GM12878 (cell line): ENCODE measurements at regions of chr7 and their contacts with region 1.

Region 1: DNA sequence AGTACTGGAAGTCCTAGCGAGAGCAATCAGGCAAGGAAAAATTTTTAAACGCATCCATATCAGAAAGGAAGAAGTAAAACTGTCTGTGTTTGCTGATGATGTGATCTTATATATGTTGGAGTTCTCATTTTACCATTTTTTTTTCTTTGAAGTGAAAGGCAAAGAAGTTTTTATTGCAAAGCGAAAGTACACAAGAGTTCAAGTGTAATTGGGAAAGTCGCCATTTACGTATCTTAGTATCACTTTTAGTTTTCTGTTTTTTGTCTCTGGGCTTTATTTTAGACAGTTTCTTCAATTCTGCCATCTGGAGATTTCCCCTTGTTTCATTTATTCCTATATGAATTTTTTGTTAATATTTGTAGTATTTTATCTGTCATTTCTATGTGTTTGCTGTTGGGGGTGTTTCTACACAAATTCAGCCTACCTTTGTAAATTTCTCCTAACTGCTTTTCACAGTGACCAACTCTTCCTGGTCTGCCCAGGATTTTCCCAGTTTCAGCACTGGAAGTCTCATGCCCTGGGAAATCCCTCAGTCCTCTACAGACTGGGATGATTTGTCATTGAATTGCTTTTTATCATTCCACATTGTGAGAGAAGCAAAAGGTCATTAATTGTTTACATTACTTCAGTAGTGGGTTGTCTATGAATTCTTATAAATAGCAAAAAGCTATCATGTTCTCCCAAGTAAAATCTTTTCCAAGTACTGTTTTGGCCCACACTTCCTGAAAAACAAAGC is 23.2 kb downstream of the BET1 start:
- DNase-seq: no peak
- ATAC-seq: peak; percentile 72
- H3K4me3 ChIP-seq: peak overlapping the region; percentile 38; the same call in 1 of the 2 replicates
- H3K27ac ChIP-seq: peak overlapping the region; percentile 51
- H3K4me1 ChIP-seq: no peaks in the 10 kb centered on the region
- H3K27me3 ChIP-seq: no peaks in the 10 kb centered on the region
- CTCF ChIP-seq: no peak
- EP300 ChIP-seq: no peak
- POLR2A ChIP-seq: no peak
- RAD21 ChIP-seq: no peak

Region 2: GRCh38 chr7:93921607-93922566 is 59.0 kb before region 1 on chr7 and contains the start of gene GNG11:
- CTCF ChIA-PET with region 1: no interaction called
- POLR2A ChIA-PET with region 1: no interaction called
- RAD21 ChIA-PET with region 1: no interaction called
- SMC1A ChIA-PET with region 1: no interaction called
- in situ Hi-C with region 1: no loop called
- intact Hi-C with region 1: no loop called
- DNase-seq: no peak
- ATAC-seq: peak; percentile 84
- H3K4me3 ChIP-seq: peak within 1 kb of the TSS; percentile 61
- H3K27ac ChIP-seq: peak within 1 kb of the TSS; percentile 24; the same call in 1 of the 2 replicates
- H3K4me1 ChIP-seq: no peaks in the 10 kb centered on the region
- H3K27me3 ChIP-seq: no peaks in the 10 kb centered on the region
- CTCF ChIP-seq: peak in 1 of 3 experiments; percentile 21; a peak in 1 of 6 replicates
- EP300 ChIP-seq: no peak
- POLR2A ChIP-seq: no peak
- RAD21 ChIP-seq: no peak
- polyA plus RNA-seq, gene GNG11: 2.0 to 2.3 TPM

Region 3: DNA sequence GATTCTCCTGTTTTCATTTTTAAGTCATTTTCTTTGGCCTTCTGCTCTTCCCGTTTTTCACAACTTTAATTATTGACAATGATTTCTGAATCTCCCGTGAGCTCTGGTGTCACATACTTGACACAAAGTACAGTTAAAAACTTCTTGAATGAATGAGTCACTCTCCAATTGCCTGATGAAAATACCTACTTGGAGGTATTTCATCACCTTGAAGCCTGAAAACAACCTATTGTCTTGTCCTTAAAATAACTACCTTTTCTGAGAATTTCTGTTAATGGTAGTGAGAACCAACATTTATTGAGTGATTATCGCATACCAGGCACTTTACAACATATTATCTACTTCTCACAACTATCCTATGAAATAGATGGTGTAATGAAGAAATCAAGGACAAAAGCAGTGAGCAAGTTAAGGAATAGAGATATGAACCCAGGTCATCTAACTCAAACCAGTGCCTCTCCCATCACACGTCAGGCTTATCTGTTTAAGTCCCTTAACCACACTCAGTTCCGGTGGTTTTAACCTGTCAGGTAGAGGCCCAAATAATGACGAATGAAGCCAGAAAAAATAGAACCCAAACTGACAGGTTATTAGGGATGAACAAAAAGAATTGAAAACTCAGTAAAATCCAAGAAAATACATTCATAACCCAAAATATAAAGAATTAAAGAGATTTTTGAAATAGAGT is 11.7 kb after region 1 on chr7:
- CTCF ChIA-PET with region 1: interaction called, 4 read pairs
- POLR2A ChIA-PET with region 1: no interaction called
- RAD21 ChIA-PET with region 1: no interaction called
- SMC1A ChIA-PET with region 1: interaction called, 10 read pairs
- in situ Hi-C with region 1: no loop called
- intact Hi-C with region 1: no loop called
- DNase-seq: no peak
- ATAC-seq: peak; percentile 91
- H3K4me3 ChIP-seq: no peak overlapping the region
- H3K27ac ChIP-seq: no peak overlapping the region
- H3K4me1 ChIP-seq: no peaks in the 10 kb centered on the region
- H3K27me3 ChIP-seq: no peaks in the 10 kb centered on the region
- CTCF ChIP-seq: no peak
- EP300 ChIP-seq: peak in 1 of 2 experiments; percentile 26; a peak in 1 of 4 replicates
- POLR2A ChIP-seq: no peak
- RAD21 ChIP-seq: no peak